Aorta (tissue), 5 donors: ENCODE measurements at regions of chr5 and their contacts with region 1.

Region 1: GRCh38 chr5:148966348-148966747 is 96.5 kb downstream of the SH3TC2 start:
- DNase-seq: no peak
- ATAC-seq: no peak
- H3K4me3 ChIP-seq: no peak overlapping the region
- H3K27ac ChIP-seq: peak overlapping the region; percentile 78 to 86
- H3K4me1 ChIP-seq: peaks cover 4 to 5% of the 10 kb centered on the region in 2 donors
- H3K27me3 ChIP-seq: no peaks in the 10 kb centered on the region

Region 2: GRCh38 chr5:147901555-147901954 is 1064.8 kb before region 1 on chr5:
- intact Hi-C with region 1: loop called in 1 of 2 experiments (anchors 5 kb)
- DNase-seq: peak in 1 of 2 donors; percentile 82
- ATAC-seq: peak; percentile 71
- H3K4me3 ChIP-seq: no peak overlapping the region
- H3K27ac ChIP-seq: peak overlapping the region; percentile 34 to 92
- H3K4me1 ChIP-seq: peaks cover 4 to 10% of the 10 kb centered on the region in 2 donors
- H3K27me3 ChIP-seq: no peaks in the 10 kb centered on the region